ENCODE measurements at regions of chr1 and their contacts with region 1.

Region 1: DNA sequence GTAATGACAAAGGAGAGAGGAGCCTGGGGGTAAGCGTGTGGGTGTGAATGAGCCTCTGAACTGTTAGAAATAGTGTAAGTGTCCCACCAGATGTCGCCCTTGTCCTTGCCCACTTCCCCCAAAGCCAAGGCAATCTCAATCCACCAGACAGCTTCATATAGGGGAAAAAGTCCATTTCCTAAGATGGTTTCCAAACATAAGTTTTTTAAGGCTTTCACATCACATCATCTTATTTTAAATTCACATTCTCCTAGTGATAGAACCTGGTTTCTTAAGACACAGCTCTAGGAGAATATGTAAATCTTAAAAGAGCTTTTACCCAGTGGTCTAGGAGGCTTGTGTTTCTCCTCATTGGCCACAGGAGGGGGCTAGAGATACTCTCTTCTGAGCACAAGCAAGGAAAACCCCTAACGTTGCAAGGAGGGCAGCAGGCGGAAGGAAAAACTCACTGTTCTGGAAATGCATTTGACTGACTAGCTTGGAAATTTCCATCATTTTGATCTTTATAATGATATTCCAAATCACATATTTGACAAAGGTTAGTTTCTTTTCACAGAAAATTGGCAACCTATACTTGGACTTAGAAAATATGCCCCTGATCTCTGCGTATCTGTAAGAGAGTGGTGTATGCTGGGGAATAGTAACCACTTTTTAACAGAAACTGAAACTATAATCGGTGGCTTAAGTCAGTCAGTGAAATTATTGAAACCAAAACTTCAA is 51.9 kb upstream of the LPAR3 start:
- DNase-seq: peak; percentile 71 to 86 (median 83)
- H3K4me3 ChIP-seq: peak overlapping the region in 2 of 4 donors; percentile 23 to 52
- H3K27ac ChIP-seq: peak overlapping the region; percentile 19 to 84 (median 77)
- H3K4me1 ChIP-seq: peaks cover 5 to 12% of the 10 kb centered on the region in 2 donors
- H3K27me3 ChIP-seq: no peaks in the 10 kb centered on the region
- CTCF ChIP-seq: peak; percentile 84 to 99 (median 96)
- POLR2A ChIP-seq: no peak

Region 2: GRCh38 chr1:84669831-84670230 is 275.1 kb before region 1 on chr1:
- intact Hi-C with region 1: no loop called
- DNase-seq: no peak
- H3K4me3 ChIP-seq: no peak overlapping the region
- H3K27ac ChIP-seq: no peak overlapping the region
- H3K4me1 ChIP-seq: no peaks in the 10 kb centered on the region
- H3K27me3 ChIP-seq: no peaks in the 10 kb centered on the region
- CTCF ChIP-seq: no peak
- POLR2A ChIP-seq: no peak

Region 3: DNA sequence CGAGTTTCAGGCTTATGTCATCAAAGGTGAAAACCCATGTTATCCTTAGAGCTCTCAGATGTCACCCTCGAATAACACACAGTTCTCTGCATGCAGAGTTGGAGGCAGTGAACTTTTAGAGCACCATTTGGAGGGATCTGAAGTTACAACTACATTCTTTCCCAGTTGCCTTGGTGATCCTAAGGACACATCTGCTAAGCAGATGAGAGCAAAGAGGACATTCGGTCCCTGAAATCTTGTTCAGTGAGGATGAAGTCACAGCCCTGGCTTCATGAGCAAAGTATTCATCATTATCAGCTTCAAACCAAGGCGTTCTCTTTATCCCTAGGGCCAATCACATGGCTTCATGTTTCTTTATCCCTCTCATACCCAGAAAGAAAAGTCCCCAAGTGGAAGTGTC is 75.1 kb after region 1 on chr1:
- intact Hi-C with region 1: loop called (anchors 5 kb)
- DNase-seq: no peak
- H3K4me3 ChIP-seq: no peak overlapping the region
- H3K27ac ChIP-seq: no peak overlapping the region
- H3K4me1 ChIP-seq: no peaks in the 10 kb centered on the region
- H3K27me3 ChIP-seq: no peaks in the 10 kb centered on the region
- CTCF ChIP-seq: no peak
- POLR2A ChIP-seq: no peak

Region 4: GRCh38 chr1:85027242-85027983 is 82.5 kb after region 1 on chr1:
- intact Hi-C with region 1: loop called (anchors 5 kb)
- DNase-seq: peak in 1 of 7 donors; percentile 17
- H3K4me3 ChIP-seq: no peak overlapping the region
- H3K27ac ChIP-seq: no peak overlapping the region
- H3K4me1 ChIP-seq: no peaks in the 10 kb centered on the region
- H3K27me3 ChIP-seq: no peaks in the 10 kb centered on the region
- CTCF ChIP-seq: peak in 4 of 6 experiments; percentile 29 to 53 (median 36)
- POLR2A ChIP-seq: no peak

Region 5: DNA sequence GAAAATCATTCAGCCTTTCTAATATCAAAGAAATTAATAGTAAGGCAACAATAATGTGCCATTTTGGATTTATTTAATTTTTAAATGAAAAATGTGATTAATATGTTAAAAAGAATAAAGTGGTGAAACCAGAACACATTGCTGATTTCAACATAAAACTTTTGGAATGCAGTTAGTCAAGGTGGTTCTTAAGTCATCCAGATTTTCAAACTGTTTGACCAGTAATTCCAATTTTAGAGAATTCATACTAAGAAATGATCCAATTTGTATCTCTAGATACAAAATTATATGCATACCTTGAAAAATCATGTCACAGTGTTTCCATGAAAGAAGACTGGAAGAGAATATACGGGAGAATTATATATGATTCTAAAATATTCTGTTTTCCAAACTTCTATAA is 157.5 kb after region 1 on chr1:
- intact Hi-C with region 1: no loop called
- DNase-seq: no peak
- H3K4me3 ChIP-seq: no peak overlapping the region
- H3K27ac ChIP-seq: no peak overlapping the region
- H3K4me1 ChIP-seq: no peaks in the 10 kb centered on the region
- H3K27me3 ChIP-seq: no peaks in the 10 kb centered on the region
- CTCF ChIP-seq: no peak
- POLR2A ChIP-seq: no peak

Measured in adrenal gland (tissue), 19 donors.